ENCODE measurements at regions of chr10 and their contacts with region 1.

Region 1: GRCh38 chr10:115417585-115418265 is 324.6 kb downstream of the ATRNL1 start:
- DNase-seq: peak; percentile 35
- H3K4me3 ChIP-seq: no peak overlapping the region
- H3K27ac ChIP-seq: no peak overlapping the region
- H3K4me1 ChIP-seq: no peaks in the 10 kb centered on the region
- H3K27me3 ChIP-seq: no peaks in the 10 kb centered on the region
- CTCF ChIP-seq: peak; percentile 55 to 67
- POLR2A ChIP-seq: no peak

Region 2: GRCh38 chr10:115141254-115141653 is 276.5 kb before region 1 on chr10:
- CTCF ChIA-PET with region 1: interaction called, 10 read pairs
- POLR2A ChIA-PET with region 1: no interaction called
- dilution Hi-C with region 1: no loop called
- intact Hi-C with region 1: loop called (anchors 1 kb)
- DNase-seq: peak; percentile 13
- H3K4me3 ChIP-seq: no peak overlapping the region
- H3K27ac ChIP-seq: no peak overlapping the region
- H3K4me1 ChIP-seq: no peaks in the 10 kb centered on the region
- H3K27me3 ChIP-seq: no peaks in the 10 kb centered on the region
- CTCF ChIP-seq: peak in 1 of 2 donors; percentile 18
- POLR2A ChIP-seq: no peak

Region 3: GRCh38 chr10:115171392-115171960 is 246.2 kb before region 1 on chr10:
- CTCF ChIA-PET with region 1: interaction called, 3 read pairs
- POLR2A ChIA-PET with region 1: no interaction called
- dilution Hi-C with region 1: no loop called
- intact Hi-C with region 1: loop called (anchors 1 kb)
- DNase-seq: peak; percentile 16
- H3K4me3 ChIP-seq: no peak overlapping the region
- H3K27ac ChIP-seq: no peak overlapping the region
- H3K4me1 ChIP-seq: no peaks in the 10 kb centered on the region
- H3K27me3 ChIP-seq: peaks cover 0 to 1% of the 10 kb centered on the region in 2 experiments
- CTCF ChIP-seq: peak in 1 of 2 donors; percentile 19
- POLR2A ChIP-seq: no peak

Region 4: DNA sequence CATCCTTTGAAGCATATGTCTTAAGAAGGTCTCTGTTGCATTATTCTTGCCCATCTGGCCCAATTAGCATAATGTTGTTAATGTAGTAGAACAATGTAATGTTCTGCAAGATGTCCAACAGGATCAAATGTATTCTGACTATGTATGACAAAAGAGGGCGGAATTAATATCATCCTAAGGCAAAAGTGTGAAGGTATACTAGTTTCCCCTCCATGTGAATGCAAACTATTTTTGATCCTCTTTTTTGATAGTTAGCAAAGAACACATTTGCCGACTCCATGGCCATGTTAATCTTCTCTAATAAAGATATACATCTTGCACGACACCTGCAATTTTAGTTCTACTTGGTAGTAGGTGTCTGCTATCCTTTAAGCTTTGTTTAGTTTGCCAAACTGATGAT is 166.9 kb before region 1 on chr10:
- CTCF ChIA-PET with region 1: no interaction called
- POLR2A ChIA-PET with region 1: no interaction called
- dilution Hi-C with region 1: no loop called
- intact Hi-C with region 1: no loop called
- DNase-seq: no peak
- H3K4me3 ChIP-seq: no peak overlapping the region
- H3K27ac ChIP-seq: no peak overlapping the region
- H3K4me1 ChIP-seq: no peaks in the 10 kb centered on the region
- H3K27me3 ChIP-seq: no peaks in the 10 kb centered on the region
- CTCF ChIP-seq: no peak
- POLR2A ChIP-seq: no peak

Region 5: DNA sequence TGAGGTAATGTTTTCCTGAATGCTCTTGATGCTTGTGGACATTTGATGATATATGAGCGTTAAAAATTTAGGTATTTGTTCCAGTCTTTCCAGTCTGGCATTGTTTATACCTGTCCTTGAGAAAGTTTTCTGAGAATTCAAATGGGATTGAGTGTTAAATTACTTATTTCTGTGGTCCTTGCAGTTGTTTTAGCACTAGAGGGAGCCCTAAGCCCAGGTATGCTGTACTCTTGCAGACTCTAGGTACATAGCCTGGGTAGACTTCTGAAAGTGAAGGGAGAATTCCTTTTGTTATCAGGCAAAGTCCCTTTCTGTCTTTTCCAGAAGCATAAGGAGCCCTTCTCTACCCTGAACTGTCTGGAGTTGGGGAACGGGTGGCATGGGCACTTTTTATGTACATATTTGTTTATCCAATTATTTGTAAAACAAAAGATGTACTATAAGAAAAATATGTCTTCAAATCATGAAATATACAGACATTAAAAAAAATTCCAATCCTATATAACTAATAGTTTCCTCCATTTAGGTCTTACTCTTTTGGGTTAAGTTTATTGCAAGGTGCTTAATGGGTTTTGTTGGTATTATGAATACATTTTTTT is 62.5 kb before region 1 on chr10:
- CTCF ChIA-PET with region 1: interaction called, 4 read pairs
- POLR2A ChIA-PET with region 1: no interaction called
- dilution Hi-C with region 1: no loop called
- intact Hi-C with region 1: loop called (anchors 1 kb)
- DNase-seq: peak; percentile 49
- H3K4me3 ChIP-seq: no peak overlapping the region
- H3K27ac ChIP-seq: no peak overlapping the region
- H3K4me1 ChIP-seq: no peaks in the 10 kb centered on the region
- H3K27me3 ChIP-seq: no peaks in the 10 kb centered on the region
- CTCF ChIP-seq: peak; percentile 43 to 63
- POLR2A ChIP-seq: no peak

Measured in endothelial cell of umbilical vein (primary cell).